HCT116 (cell line): ENCODE measurements at regions of chr12 and their contacts with region 1.

Region 1: DNA sequence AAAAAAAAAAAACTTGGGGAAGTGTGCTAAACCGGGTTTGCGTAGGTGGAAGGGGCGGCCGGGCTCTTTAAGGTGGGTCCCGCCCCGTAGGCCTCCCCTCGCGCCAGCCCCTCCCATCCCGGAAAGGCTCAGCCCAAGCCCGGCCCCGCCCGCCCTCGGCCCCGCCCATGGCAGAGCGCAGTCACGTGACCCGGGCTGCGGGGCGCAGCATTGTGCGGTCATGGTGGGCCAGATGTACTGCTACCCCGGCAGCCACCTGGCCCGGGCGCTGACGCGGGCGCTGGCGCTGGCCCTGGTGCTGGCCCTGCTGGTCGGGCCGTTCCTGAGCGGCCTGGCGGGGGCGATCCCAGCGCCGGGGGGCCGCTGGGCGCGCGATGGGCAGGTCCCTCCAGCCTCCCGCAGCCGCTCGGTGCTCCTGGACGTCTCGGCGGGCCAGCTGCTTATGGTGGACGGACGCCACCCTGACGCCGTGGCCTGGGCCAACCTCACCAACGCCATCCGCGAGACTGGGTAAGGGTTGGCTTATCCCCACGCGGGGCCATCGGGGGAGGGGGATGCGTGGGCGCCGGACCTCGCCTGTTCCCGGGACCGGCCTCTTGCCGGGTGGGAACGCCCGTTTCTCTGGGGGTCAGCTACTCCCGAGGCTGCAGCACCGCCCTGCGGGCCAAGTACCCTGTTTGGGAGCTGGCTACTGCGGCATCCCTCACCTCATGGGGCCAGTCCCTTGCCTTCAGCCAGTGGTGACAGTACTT is at the start of gene PLBD2:
- DNase-seq: peak; percentile 82
- ATAC-seq: peak; percentile 94
- H3K4me3 ChIP-seq: peak within 1 kb of the TSS; percentile 88 to 95
- H3K27ac ChIP-seq: peak within 1 kb of the TSS; percentile 85
- H3K4me1 ChIP-seq: peaks cover 12 to 24% of the 10 kb centered on the region in 2 experiments
- H3K27me3 ChIP-seq: no peaks in the 10 kb centered on the region
- CTCF ChIP-seq: no peak
- POLR2A ChIP-seq: peak; percentile 18
- RAD21 ChIP-seq: no peak; the same call in 1 of the 2 replicates
- total RNA-seq, gene PLBD2: 45.0 TPM

Region 2: GRCh38 chr12:113292091-113292490 is 66.5 kb before region 1 on chr12:
- CTCF ChIA-PET with region 1: no interaction called
- POLR2A ChIA-PET with region 1: no interaction called
- RAD21 ChIA-PET with region 1: no interaction called
- intact Hi-C with region 1: no loop called
- DNase-seq: no peak
- ATAC-seq: no peak
- H3K4me3 ChIP-seq: no peak overlapping the region
- H3K27ac ChIP-seq: no peak overlapping the region
- H3K4me1 ChIP-seq: no peaks in the 10 kb centered on the region
- H3K27me3 ChIP-seq: no peaks in the 10 kb centered on the region
- CTCF ChIP-seq: no peak
- POLR2A ChIP-seq: no peak
- RAD21 ChIP-seq: no peak

Region 3: DNA sequence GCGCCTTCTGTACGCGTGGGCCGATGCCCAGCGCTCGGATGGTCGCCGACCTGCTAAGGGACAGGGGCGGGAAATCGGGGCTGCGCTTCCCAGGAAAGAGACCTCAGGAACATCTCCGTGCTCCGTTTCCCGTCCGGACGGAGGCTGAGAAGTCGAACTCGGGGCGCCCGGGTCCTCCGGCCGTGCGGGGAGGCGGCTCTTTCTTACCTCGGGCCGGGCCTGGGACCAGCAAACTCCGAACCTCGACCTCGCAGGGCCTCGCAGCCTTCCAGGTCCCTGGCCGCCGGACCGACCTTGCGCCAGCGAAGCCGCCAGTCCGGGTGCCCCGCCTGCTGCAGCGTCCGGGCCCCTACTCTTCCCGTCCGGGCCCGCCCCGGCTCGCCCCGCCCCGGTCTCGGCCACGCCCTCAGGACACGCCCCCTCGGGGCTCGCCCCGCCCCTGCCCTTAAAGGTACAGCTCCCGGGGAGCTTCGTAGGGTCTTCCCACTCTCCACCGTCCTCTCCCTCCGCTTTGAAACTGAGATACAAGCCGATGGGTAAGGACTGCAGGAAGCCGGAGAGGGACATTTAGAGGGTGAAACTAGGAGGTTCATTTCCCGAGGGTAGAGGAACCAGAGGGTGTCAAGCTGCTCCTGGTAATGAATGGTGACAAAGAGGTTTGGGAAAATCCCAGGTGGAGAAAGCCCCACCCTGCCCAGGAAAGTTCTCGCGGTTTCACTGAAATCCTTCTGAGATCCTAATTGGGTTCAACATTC is 23.6 kb before region 1 on chr12 and contains the start of gene SLC8B1:
- CTCF ChIA-PET with region 1: interaction called, 4 read pairs
- POLR2A ChIA-PET with region 1: interaction called, 6 read pairs
- RAD21 ChIA-PET with region 1: no interaction called
- intact Hi-C with region 1: loop called (anchors 2 kb)
- DNase-seq: no peak
- ATAC-seq: peak; percentile 93
- H3K4me3 ChIP-seq: peak within 1 kb of the TSS; percentile 69 to 81
- H3K27ac ChIP-seq: peak within 1 kb of the TSS; percentile 65
- H3K4me1 ChIP-seq: peaks cover 4 to 22% of the 10 kb centered on the region in 2 experiments; a peak in 3 of 4 replicates
- H3K27me3 ChIP-seq: no peaks in the 10 kb centered on the region
- CTCF ChIP-seq: no peak
- POLR2A ChIP-seq: peak; percentile 73
- RAD21 ChIP-seq: no peak
- total RNA-seq, gene SLC8B1: 30.9 TPM

Region 4: GRCh38 chr12:113369391-113369985 is 10.9 kb after region 1 on chr12:
- CTCF ChIA-PET with region 1: no interaction called
- POLR2A ChIA-PET with region 1: no interaction called
- RAD21 ChIA-PET with region 1: no interaction called
- intact Hi-C with region 1: no loop called
- DNase-seq: no peak
- ATAC-seq: no peak
- H3K4me3 ChIP-seq: no peak overlapping the region
- H3K27ac ChIP-seq: no peak overlapping the region
- H3K4me1 ChIP-seq: peaks cover 0 to 4% of the 10 kb centered on the region in 2 experiments; a peak in 1 of 4 replicates
- H3K27me3 ChIP-seq: no peaks in the 10 kb centered on the region
- CTCF ChIP-seq: no peak
- POLR2A ChIP-seq: no peak
- RAD21 ChIP-seq: no peak